ENCODE measurements at regions of chr10 and their contacts with region 1.

Region 1: GRCh38 chr10:99834410-99834809 is 52.0 kb downstream of the ABCC2 start:
- DNase-seq: peak; percentile 88
- ATAC-seq: peak; percentile 100
- H3K4me3 ChIP-seq: no peak overlapping the region
- H3K27ac ChIP-seq: peak overlapping the region; percentile 79
- H3K4me1 ChIP-seq: peaks cover 14% of the 10 kb centered on the region
- H3K27me3 ChIP-seq: no peaks in the 10 kb centered on the region
- CTCF ChIP-seq: no peak

Region 2: GRCh38 chr10:99732033-99732912 is 102.1 kb before region 1 on chr10 and contains the starts of genes COX15 and CUTC:
- CTCF ChIA-PET with region 1: no interaction called
- POLR2A ChIA-PET with region 1: no interaction called
- intact Hi-C with region 1: loop called (anchors 5 kb)
- DNase-seq: peak; percentile 95
- ATAC-seq: peak; percentile 88
- H3K4me3 ChIP-seq: peak within 1 kb of the TSS; percentile 95
- H3K27ac ChIP-seq: peak within 1 kb of the TSS; percentile 89
- H3K4me1 ChIP-seq: peaks cover 3% of the 10 kb centered on the region; the same call in 1 of the 2 replicates
- H3K27me3 ChIP-seq: no peaks in the 10 kb centered on the region
- CTCF ChIP-seq: no peak; the same call in 1 of the 2 replicates
- total RNA-seq, gene COX15: 16.6 and 24.6 TPM in 2 replicates
- total RNA-seq, gene CUTC: 10.2 and 14.5 TPM in 2 replicates

Region 3: DNA sequence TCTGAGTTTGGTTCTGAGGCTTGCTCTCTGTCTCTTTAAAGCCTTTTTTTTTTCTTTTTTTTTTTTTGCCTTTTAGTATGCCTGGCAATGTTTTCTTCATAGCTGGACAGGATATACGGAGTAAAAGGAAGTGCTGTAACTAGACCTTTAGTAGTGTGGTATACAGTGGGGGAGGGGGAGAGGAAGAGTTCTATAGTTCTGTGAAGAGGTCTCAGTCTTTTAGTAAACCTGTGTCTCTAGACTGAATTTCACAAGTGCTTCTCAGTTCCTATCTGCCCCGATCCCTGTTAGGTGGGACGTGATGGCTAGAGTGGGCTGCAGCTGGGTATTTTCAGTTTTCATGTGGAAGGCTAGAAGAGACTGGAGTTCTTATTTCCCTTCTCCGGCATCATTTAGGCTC is 55.1 kb before region 1 on chr10:
- CTCF ChIA-PET with region 1: no interaction called
- POLR2A ChIA-PET with region 1: no interaction called
- intact Hi-C with region 1: loop called (anchors 5 kb)
- DNase-seq: peak; percentile 59
- ATAC-seq: peak; percentile 65
- H3K4me3 ChIP-seq: peak overlapping the region; percentile 60
- H3K27ac ChIP-seq: peak overlapping the region; percentile 97
- H3K4me1 ChIP-seq: peaks cover 69% of the 10 kb centered on the region
- H3K27me3 ChIP-seq: no peaks in the 10 kb centered on the region
- CTCF ChIP-seq: no peak